ENCODE measurements at regions of chr14 and their contacts with region 1.

Region 1: DNA sequence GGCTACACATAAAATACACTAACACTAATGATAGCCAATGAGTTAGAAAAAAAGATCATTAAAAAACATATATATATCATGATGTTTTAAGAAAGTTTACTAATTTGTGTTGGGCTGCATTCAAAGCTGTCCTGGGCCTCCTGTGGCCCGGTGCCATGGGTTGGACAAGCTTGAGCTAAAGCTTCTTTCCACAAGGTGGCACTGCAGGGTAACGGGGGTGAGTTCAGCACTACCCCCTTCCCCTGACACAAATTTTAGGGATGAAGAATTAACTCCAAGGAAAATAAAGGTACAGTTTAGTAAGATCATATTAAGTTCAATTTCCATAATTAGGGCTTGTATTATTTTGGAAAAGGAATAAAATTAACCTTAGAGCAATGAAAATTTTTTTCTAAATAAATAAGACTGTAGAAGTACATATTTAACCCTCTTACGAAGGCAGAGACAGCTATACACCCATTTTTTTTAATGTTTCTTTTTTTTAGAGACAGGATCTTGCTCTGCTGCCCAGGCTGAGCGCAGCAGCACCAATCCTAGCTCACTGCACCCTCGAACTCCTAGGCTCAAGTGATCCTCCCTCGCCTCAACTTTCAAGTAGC is 38.9 kb downstream of the PPP1R13B start:
- DNase-seq: peak; percentile 55 to 67 (median 61)
- H3K4me3 ChIP-seq: no peak overlapping the region
- H3K4me3 Mint-ChIP-seq: no peak overlapping the region
- H3K27ac ChIP-seq: no peak overlapping the region
- H3K27ac Mint-ChIP-seq: no peak overlapping the region
- H3K4me1 ChIP-seq: no peaks in the 10 kb centered on the region
- H3K4me1 Mint-ChIP-seq: peaks cover 5 to 18% (median 8%) of the 10 kb centered on the region in 4 donors
- H3K27me3 ChIP-seq: no peaks in the 10 kb centered on the region
- H3K27me3 Mint-ChIP-seq: no peaks in the 10 kb centered on the region

Region 2: GRCh38 chr14:103828315-103828967 is 19.9 kb after region 1 on chr14:
- CTCF ChIA-PET with region 1: interaction called, 16 read pairs
- POLR2A ChIA-PET with region 1: no interaction called
- intact Hi-C with region 1: no loop called
- DNase-seq: no peak
- H3K4me3 ChIP-seq: no peak overlapping the region
- H3K4me3 Mint-ChIP-seq: no peak overlapping the region
- H3K27ac ChIP-seq: no peak overlapping the region
- H3K27ac Mint-ChIP-seq: no peak overlapping the region
- H3K4me1 ChIP-seq: no peaks in the 10 kb centered on the region
- H3K4me1 Mint-ChIP-seq: peaks cover 6 to 20% (median 10%) of the 10 kb centered on the region in 4 donors
- H3K27me3 ChIP-seq: no peaks in the 10 kb centered on the region
- H3K27me3 Mint-ChIP-seq: no peaks in the 10 kb centered on the region

Region 3: GRCh38 chr14:103847451-103848188 is 39.1 kb after region 1 on chr14 and contains the start of gene PPP1R13B:
- CTCF ChIA-PET with region 1: no interaction called
- POLR2A ChIA-PET with region 1: no interaction called
- intact Hi-C with region 1: loop called (anchors 2 kb)
- DNase-seq: peak; percentile 90 to 93 (median 92)
- H3K4me3 ChIP-seq: peak within 1 kb of the TSS; percentile 1 to 55
- H3K4me3 Mint-ChIP-seq: peak within 1 kb of the TSS; percentile 86 to 96 (median 92)
- H3K27ac ChIP-seq: peak within 1 kb of the TSS; percentile 26
- H3K27ac Mint-ChIP-seq: peak within 1 kb of the TSS; percentile 43 to 93 (median 85)
- H3K4me1 ChIP-seq: peaks cover 12% of the 10 kb centered on the region
- H3K4me1 Mint-ChIP-seq: peaks cover 9 to 26% (median 16%) of the 10 kb centered on the region in 4 donors
- H3K27me3 ChIP-seq: no peaks in the 10 kb centered on the region
- H3K27me3 Mint-ChIP-seq: no peaks in the 10 kb centered on the region
- total RNA-seq, gene PPP1R13B: 23.3 to 30.5 TPM

Region 4: DNA sequence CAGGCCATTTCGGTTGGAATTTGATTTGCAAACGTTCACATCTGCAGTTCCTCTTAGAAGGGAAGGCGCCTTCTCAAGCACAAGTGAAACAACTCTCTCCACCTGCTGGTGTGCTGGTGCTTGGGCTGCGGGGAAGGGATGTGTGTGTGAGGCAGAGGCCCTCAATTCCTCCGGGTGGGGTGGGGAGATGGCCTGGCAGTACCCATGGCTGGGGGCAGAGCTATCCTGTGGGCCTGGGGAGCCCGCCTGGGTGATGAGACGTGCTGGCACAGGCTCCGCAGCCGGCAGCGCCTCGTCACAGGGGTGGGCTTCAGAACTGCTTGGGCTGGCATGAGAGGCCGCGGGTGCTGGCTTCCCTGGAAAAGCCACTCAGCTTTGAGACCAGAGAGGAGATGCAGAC is 90.8 kb after region 1 on chr14:
- CTCF ChIA-PET with region 1: interaction called, 265 read pairs
- POLR2A ChIA-PET with region 1: no interaction called
- intact Hi-C with region 1: no loop called
- DNase-seq: no peak
- H3K4me3 ChIP-seq: no peak overlapping the region
- H3K4me3 Mint-ChIP-seq: no peak overlapping the region
- H3K27ac ChIP-seq: no peak overlapping the region
- H3K27ac Mint-ChIP-seq: no peak overlapping the region
- H3K4me1 ChIP-seq: no peaks in the 10 kb centered on the region
- H3K4me1 Mint-ChIP-seq: peaks cover 0 to 7% (median 3%) of the 10 kb centered on the region in 4 donors
- H3K27me3 ChIP-seq: no peaks in the 10 kb centered on the region
- H3K27me3 Mint-ChIP-seq: peaks cover 0 to 3% of the 10 kb centered on the region in 2 donors

Region 5: GRCh38 chr14:103910262-103910935 is 101.9 kb after region 1 on chr14:
- CTCF ChIA-PET with region 1: interaction called, 265 read pairs
- POLR2A ChIA-PET with region 1: interaction called, 6 read pairs
- intact Hi-C with region 1: loop called (anchors 1 kb)
- DNase-seq: peak; percentile 61 to 70 (median 65)
- H3K4me3 ChIP-seq: peak overlapping the region in 1 of 2 donors; percentile 15
- H3K4me3 Mint-ChIP-seq: peak overlapping the region; percentile 47 to 80 (median 71)
- H3K27ac ChIP-seq: peak overlapping the region; percentile 4
- H3K27ac Mint-ChIP-seq: peak overlapping the region in 6 of 7 donors; percentile 43 to 79 (median 72)
- H3K4me1 ChIP-seq: peaks cover 8% of the 10 kb centered on the region
- H3K4me1 Mint-ChIP-seq: peaks cover 6 to 20% (median 10%) of the 10 kb centered on the region in 4 donors
- H3K27me3 ChIP-seq: no peaks in the 10 kb centered on the region
- H3K27me3 Mint-ChIP-seq: no peaks in the 10 kb centered on the region

Region 6: DNA sequence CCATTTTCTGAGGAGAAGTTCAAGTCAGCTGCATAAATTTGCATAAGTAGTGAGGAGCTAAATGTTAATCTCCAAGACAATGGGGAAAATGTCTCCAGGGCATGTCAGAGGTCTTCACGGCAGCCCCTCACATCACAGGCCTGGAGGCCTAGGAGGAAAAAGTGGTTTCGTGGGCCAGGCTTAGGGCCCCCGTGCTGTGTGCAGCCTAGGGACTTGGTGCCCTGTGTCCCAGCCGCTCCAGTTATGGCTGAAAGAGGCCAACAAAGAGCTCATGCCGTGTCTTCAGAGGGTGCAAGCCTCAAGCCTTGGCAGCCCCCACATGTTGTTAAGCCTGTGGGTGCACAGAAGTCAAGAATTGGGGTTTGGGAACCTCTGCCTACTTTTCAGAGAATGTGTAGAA is 175.7 kb after region 1 on chr14:
- CTCF ChIA-PET with region 1: interaction called, 6 read pairs
- POLR2A ChIA-PET with region 1: no interaction called
- intact Hi-C with region 1: loop called (anchors 2 kb)
- DNase-seq: no peak
- H3K4me3 ChIP-seq: no peak overlapping the region
- H3K4me3 Mint-ChIP-seq: no peak overlapping the region
- H3K27ac ChIP-seq: no peak overlapping the region
- H3K27ac Mint-ChIP-seq: no peak overlapping the region
- H3K4me1 ChIP-seq: no peaks in the 10 kb centered on the region
- H3K4me1 Mint-ChIP-seq: no peaks in the 10 kb centered on the region
- H3K27me3 ChIP-seq: no peaks in the 10 kb centered on the region
- H3K27me3 Mint-ChIP-seq: peaks cover 20 to 21% of the 10 kb centered on the region in 2 donors